Psoas muscle (tissue), 8 donors: ENCODE measurements at regions of chr7 and their contacts with region 1.

Region 1: GRCh38 chr7:46864716-46865115 is 717.2 kb downstream of the TNS3 start:
- DNase-seq: no peak
- ATAC-seq: no peak
- H3K4me3 ChIP-seq: no peak overlapping the region
- H3K27ac ChIP-seq: no peak overlapping the region
- H3K4me1 ChIP-seq: no peaks in the 10 kb centered on the region
- H3K27me3 ChIP-seq: peaks cover 0 to 3% (median 0%) of the 10 kb centered on the region in 3 donors
- CTCF ChIP-seq: no peak

Region 2: GRCh38 chr7:46835556-46835955 is 29.2 kb before region 1 on chr7:
- intact Hi-C with region 1: loop called in 1 of 2 experiments (anchors 2 kb)
- DNase-seq: no peak
- ATAC-seq: no peak
- H3K4me3 ChIP-seq: no peak overlapping the region
- H3K27ac ChIP-seq: no peak overlapping the region
- H3K4me1 ChIP-seq: no peaks in the 10 kb centered on the region
- H3K27me3 ChIP-seq: no peaks in the 10 kb centered on the region
- CTCF ChIP-seq: no peak